Dendritic cell treated with granulocyte-macrophage colony-stimulating factor and Interleukin-4, amounts not matched to agents 40 ng/mL and 50 ng/mL, for 4 days (primary cell): ENCODE measurements at regions of chr2 and their contacts with region 1.

Region 1: DNA sequence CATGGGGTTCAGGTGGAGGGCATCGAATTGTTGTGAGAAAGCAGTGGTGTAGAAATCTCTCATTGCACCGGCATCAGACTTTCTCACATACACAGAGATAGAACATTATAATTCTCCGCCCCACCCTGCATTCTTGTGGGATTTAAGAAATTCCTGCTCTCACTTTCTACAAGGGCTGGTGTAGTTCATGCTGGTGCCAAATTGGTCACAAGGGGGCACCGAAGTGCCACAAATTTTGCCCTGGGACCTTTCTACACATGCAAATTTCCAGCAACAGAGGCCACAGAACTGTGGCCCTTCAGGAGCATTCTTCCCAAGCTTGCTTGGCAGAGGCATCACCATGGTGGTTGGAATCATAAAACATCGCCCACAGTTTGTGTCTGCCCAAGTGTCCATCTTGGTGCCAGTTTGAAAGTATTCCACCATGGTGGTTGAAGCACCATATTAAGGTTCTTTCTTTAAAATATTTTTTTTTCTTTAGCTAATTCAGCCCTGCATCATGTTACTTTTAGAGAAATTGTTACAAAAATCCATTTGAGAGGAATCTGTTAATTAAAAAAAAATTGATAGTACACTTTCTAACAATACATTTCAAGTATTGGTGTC is 521.2 kb upstream of the FANCL start:
- H3K4me3 Mint-ChIP-seq: no peak overlapping the region
- H3K27ac Mint-ChIP-seq: no peak overlapping the region
- H3K4me1 Mint-ChIP-seq: peaks cover 14% of the 10 kb centered on the region
- H3K27me3 Mint-ChIP-seq: no peaks in the 10 kb centered on the region

Region 2: DNA sequence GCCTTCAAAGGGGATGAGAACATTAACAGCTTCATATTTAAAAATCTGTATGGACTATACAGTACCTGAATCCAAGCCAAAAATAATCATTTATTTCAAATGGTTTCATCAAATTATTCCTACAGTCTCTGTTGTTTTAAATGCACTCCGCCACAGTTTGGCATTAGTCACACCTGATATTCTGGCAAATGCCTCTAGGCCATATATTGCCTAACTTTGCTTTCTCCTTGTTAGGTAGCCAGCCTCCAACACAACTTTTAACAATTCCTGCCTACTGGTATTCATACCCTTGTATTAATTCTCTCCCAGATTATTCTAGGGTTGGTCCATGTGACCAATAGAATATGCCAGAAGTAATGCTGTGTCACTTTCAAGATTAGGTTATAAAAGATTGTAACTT is 374.6 kb before region 1 on chr2:
- intact Hi-C with region 1: no loop called
- H3K4me3 Mint-ChIP-seq: no peak overlapping the region
- H3K27ac Mint-ChIP-seq: no peak overlapping the region
- H3K4me1 Mint-ChIP-seq: no peaks in the 10 kb centered on the region
- H3K27me3 Mint-ChIP-seq: no peaks in the 10 kb centered on the region

Region 3: DNA sequence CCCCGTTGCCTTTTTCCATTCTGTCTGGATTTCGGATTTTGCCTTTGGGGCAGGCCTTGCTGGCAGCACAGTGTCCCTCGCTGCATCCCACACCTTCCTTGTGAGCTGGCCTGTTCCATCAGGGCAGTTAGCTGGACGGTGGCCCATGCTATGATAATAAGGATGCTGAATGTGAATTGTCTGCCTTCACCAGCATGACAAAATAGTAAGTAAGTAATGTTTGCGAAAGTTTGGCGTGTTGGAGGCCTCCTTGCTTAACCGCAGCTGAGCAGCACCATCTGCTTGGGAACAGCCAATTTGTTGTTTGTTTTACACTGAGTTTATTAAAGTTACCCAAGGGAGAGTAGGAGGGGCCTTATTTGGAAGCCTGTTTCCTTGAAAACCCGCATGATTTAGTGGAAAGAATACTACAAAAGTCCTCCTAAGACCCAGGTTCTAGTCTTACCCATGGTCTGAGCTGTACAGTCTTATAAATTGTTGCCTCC is 51.4 kb before region 1 on chr2:
- intact Hi-C with region 1: no loop called
- H3K4me3 Mint-ChIP-seq: no peak overlapping the region
- H3K27ac Mint-ChIP-seq: no peak overlapping the region
- H3K4me1 Mint-ChIP-seq: peaks cover 18% of the 10 kb centered on the region
- H3K27me3 Mint-ChIP-seq: no peaks in the 10 kb centered on the region

Region 4: GRCh38 chr2:58791864-58792263 is 29.6 kb after region 1 on chr2:
- intact Hi-C with region 1: no loop called
- H3K4me3 Mint-ChIP-seq: no peak overlapping the region
- H3K27ac Mint-ChIP-seq: no peak overlapping the region
- H3K4me1 Mint-ChIP-seq: no peaks in the 10 kb centered on the region
- H3K27me3 Mint-ChIP-seq: peaks cover 2% of the 10 kb centered on the region

Region 5: DNA sequence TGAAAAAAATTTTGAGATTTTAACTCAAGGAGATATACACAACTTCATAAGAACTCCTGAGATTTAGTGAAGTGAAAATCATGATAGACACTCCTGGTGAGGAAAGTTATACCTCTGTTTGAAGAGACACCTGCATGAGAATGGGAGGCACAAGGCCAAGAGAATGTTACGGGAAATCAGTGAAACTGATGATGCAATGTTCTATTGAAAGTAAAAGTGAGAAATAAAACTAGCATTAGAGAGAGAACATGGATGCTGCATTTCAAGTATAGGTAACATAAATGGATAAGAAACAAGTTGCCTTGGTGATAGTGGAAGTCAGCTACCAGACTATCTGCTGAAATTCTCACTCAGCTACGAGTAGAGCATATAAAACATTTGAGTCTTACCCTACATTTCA is 40.9 kb after region 1 on chr2:
- intact Hi-C with region 1: no loop called
- H3K4me3 Mint-ChIP-seq: no peak overlapping the region
- H3K27ac Mint-ChIP-seq: no peak overlapping the region
- H3K4me1 Mint-ChIP-seq: peaks cover 14% of the 10 kb centered on the region
- H3K27me3 Mint-ChIP-seq: no peaks in the 10 kb centered on the region

Region 6: DNA sequence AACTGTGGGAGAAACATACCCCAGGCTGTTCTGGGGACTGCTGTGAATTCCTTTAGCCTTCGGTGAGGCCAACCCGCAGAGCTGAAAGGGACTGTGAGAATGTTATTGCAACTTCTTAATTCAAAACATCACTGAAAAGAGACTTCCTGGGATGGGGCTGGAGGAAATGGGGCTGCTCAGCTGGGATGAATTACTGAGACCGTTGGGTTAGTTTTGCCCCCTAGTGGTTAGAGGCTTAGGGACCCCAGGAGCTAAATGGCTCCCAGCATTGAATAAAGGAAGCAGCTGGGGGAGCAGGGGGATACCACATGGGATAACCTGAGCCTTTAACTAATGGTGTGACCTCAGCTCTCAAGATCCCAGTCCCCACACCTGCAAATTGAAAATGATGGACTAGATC is 420.0 kb after region 1 on chr2:
- intact Hi-C with region 1: loop called (anchors 5 kb)
- H3K4me3 Mint-ChIP-seq: no peak overlapping the region
- H3K27ac Mint-ChIP-seq: no peak overlapping the region
- H3K4me1 Mint-ChIP-seq: peaks cover 8% of the 10 kb centered on the region
- H3K27me3 Mint-ChIP-seq: no peaks in the 10 kb centered on the region